ENCODE measurements at regions of chr11 and their contacts with region 1.

Region 1: DNA sequence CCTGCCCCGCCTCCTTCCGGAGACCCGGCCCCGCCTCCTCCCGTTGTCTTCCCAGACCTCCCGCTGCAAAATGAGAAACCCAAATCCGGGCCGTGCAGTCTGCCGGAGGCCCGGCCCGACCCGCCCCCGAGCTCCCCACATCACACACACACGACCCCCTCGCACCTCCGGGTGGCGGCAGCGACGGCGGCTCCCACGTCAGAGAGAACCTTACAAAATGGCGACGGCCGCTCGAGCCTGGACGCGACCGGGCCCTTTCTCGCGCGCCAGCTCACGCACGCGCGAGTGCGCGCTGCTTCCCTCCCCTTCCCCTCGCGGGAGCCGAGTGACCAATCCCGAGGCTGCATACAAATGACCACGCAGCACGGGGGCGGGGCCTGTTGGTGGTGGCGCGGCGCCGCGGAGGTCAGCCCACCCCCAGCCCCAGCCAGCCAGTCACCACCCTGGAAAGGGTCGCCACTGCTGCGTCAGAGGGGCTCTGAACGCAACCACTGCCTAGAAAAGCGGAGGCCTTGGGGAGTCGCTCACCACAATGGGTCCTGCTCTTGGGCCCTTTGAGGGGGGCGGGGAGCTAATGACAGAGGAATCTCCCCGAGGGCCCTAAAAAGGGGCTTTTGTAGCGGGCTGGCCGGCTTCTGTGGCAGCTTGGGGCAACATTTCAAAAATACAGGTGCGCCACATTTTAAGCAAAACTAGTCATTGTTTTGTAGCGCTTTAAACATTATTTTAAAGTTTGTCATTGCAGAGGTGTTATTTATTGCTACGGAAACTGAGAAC is at the start of gene RBM4B:
- DNase-seq: peak; percentile 97
- ATAC-seq: peak; percentile 90
- H3K4me3 Mint-ChIP-seq: peak within 1 kb of the TSS; percentile 85
- H3K27ac Mint-ChIP-seq: peak within 1 kb of the TSS; percentile 94
- H3K4me1 Mint-ChIP-seq: peaks cover 27% of the 10 kb centered on the region
- H3K27me3 Mint-ChIP-seq: no peaks in the 10 kb centered on the region
- total RNA-seq, gene RBM4B: 14.7 to 14.8 TPM

Region 2: DNA sequence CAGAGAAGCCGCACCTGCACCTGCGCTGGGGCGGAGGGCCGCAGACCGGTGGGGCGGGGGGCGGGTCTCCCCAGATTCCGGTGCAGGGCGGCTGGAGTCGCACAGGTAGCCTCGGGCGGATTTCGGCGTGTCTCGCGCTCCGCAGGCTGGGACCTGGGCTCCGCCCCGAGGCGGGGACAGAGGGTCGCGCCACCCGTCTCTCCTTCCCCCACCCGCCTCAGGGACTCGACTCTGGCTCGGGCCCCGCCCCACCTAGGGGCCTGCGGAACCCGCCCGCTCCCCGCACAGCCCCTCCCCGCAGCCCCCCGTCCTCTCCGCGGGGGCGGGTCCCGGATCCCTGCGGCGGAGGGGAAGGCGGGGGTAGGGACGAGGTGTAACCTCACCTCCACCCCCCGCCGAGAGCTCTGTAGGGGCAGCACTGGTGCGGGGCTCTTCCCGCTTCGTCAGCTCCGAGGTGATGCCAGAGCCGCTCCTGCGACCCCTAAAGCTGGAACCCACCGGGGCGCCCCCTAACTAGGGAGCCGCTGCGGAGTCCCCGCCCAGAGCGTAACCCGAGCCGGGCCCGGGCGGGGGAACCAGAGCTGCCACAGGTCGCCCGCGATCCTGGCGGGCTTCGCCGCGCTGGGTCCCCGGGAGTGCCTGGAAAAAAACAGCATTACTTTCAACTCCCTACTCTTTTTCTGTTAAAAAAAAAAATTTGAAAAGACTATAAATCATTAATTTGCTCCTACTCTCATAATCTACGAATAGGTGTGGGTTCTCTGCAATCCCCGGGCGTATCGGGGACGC is 306.0 kb before region 1 on chr11 and contains the start of gene SLC29A2:
- CTCF ChIA-PET with region 1: no interaction called
- POLR2A ChIA-PET with region 1: no interaction called
- intact Hi-C with region 1: loop called in 1 of 2 experiments (anchors 1 kb)
- DNase-seq: peak; percentile 92
- ATAC-seq: peak; percentile 87
- H3K4me3 Mint-ChIP-seq: peak within 1 kb of the TSS; percentile 91
- H3K27ac Mint-ChIP-seq: peak within 1 kb of the TSS; percentile 91
- H3K4me1 Mint-ChIP-seq: peaks cover 19% of the 10 kb centered on the region
- H3K27me3 Mint-ChIP-seq: no peaks in the 10 kb centered on the region
- total RNA-seq, gene SLC29A2: 13.6 to 14.4 TPM

Region 3: DNA sequence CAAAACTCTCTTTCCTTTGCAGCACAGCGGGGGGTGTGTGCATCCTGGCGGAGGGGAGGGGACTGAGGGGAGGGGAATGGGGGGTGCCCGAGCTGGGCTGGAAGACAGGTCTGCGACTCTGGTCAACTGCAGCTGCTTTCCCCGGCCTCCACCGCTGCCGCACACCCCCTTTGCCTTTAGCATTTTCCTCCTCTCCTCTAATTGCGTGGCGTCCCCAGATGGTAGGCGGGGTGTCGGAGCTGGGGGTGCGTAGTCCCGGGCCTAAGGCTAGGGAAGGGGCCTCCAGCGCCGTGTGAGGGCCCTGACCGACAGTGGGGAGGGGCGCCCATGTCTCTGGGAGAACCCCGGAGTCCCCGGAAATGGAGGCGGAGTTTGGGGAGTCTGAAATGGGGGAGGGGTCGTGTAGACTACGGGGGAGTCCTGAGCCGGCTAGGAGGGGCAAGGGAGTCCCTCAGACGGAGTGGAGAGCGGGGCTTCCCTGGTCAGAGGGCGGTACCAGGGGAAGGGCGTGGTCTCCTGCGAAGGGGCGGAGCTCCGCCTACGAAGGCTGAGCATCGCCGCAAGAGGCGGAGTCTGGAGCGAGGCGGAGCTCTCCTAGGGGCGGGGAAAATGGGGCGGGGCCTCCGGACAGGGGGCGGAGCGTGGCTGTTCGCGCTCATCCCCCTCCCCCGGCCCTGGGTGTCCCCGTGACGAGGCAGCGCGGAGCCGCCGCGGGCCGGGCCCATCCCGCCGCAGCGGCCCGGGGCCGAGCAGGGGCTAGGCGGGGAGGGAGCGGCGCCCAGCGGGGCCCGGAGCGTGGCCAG is 211.4 kb before region 1 on chr11 and contains the start of gene PELI3:
- CTCF ChIA-PET with region 1: interaction called, 3 read pairs
- POLR2A ChIA-PET with region 1: interaction called, 3 read pairs
- intact Hi-C with region 1: loop called in 1 of 2 experiments (anchors 1 kb)
- DNase-seq: peak; percentile 98
- ATAC-seq: peak; percentile 88
- H3K4me3 Mint-ChIP-seq: peak within 1 kb of the TSS; percentile 85
- H3K27ac Mint-ChIP-seq: peak within 1 kb of the TSS; percentile 79
- H3K4me1 Mint-ChIP-seq: peaks cover 38% of the 10 kb centered on the region
- H3K27me3 Mint-ChIP-seq: no peaks in the 10 kb centered on the region
- total RNA-seq, gene PELI3: 5.7 to 7.0 TPM

Region 4: DNA sequence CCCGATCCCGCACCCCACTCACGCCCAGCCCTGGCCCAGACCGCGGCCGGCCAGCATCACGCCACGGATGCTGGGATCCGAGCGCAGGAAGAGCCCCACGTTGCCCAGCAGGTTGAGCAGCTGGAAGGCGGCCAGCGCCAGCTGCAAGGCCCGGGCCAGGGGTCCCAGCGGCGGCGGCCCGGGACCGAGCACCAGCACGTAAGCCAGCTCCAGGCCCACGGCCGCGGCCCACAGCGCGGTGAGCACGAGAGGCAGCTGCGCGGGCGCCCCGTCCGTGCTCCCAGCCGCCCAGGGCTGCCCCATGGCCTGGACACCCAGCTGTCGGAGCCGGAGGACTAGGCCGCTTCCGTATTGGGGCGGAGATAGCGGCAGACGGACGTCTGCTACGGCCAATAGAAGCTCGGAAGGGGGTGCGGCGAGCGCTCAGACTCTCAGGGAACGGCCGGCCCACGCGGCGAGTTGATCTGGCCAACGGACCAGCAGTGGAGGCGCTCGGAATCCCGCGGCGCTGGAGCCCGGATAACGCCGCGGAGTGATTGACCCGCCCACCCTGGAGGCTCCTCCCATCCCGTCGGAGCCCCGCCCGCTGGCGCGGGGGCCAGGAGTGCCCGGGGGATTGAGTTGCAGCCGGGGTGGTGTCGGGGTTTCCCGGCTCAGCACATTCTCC is 132.0 kb before region 1 on chr11 and contains the start of gene ZDHHC24:
- CTCF ChIA-PET with region 1: interaction called, 3 read pairs
- POLR2A ChIA-PET with region 1: interaction called, 7 read pairs
- intact Hi-C with region 1: loop called in 1 of 2 experiments (anchors 1 kb)
- DNase-seq: peak; percentile 95
- ATAC-seq: peak; percentile 94
- H3K4me3 Mint-ChIP-seq: peak within 1 kb of the TSS; percentile 76
- H3K27ac Mint-ChIP-seq: peak within 1 kb of the TSS; percentile 67
- H3K4me1 Mint-ChIP-seq: peaks cover 20% of the 10 kb centered on the region
- H3K27me3 Mint-ChIP-seq: peaks cover 5% of the 10 kb centered on the region
- total RNA-seq, gene ZDHHC24: 9.7 to 11.3 TPM

Region 5: GRCh38 chr11:66592457-66593302 is 85.1 kb before region 1 on chr11 and contains the starts of genes CCDC87 and CCS:
- CTCF ChIA-PET with region 1: interaction called, 24 read pairs
- POLR2A ChIA-PET with region 1: interaction called, 3 read pairs
- intact Hi-C with region 1: loop called (anchors 1 kb)
- DNase-seq: peak; percentile 99
- ATAC-seq: peak; percentile 100
- H3K4me3 Mint-ChIP-seq: peak within 1 kb of the TSS; percentile 93
- H3K27ac Mint-ChIP-seq: peak within 1 kb of the TSS; percentile 98
- H3K4me1 Mint-ChIP-seq: peaks cover 19% of the 10 kb centered on the region
- H3K27me3 Mint-ChIP-seq: no peaks in the 10 kb centered on the region
- total RNA-seq, gene CCDC87: 0.09 to 0.14 TPM
- total RNA-seq, gene CCS: 16.3 to 24.0 TPM

Region 6: GRCh38 chr11:66663741-66664296 is 14.0 kb before region 1 on chr11:
- CTCF ChIA-PET with region 1: interaction called, 11 read pairs
- POLR2A ChIA-PET with region 1: interaction called, 4 read pairs
- intact Hi-C with region 1: no loop called
- DNase-seq: no peak
- ATAC-seq: no peak
- H3K4me3 Mint-ChIP-seq: no peak overlapping the region
- H3K27ac Mint-ChIP-seq: no peak overlapping the region
- H3K4me1 Mint-ChIP-seq: peaks cover 7% of the 10 kb centered on the region
- H3K27me3 Mint-ChIP-seq: no peaks in the 10 kb centered on the region

Region 7: GRCh38 chr11:67118801-67119584 is 441.2 kb after region 1 on chr11 and contains the start of gene KDM2A:
- CTCF ChIA-PET with region 1: no interaction called
- POLR2A ChIA-PET with region 1: no interaction called
- intact Hi-C with region 1: loop called in 1 of 2 experiments (anchors 2 kb)
- DNase-seq: peak; percentile 100
- ATAC-seq: peak; percentile 85
- H3K4me3 Mint-ChIP-seq: peak within 1 kb of the TSS; percentile 98
- H3K27ac Mint-ChIP-seq: peak within 1 kb of the TSS; percentile 83
- H3K4me1 Mint-ChIP-seq: peaks cover 28% of the 10 kb centered on the region
- H3K27me3 Mint-ChIP-seq: no peaks in the 10 kb centered on the region
- total RNA-seq, gene KDM2A: 74.8 to 89.7 TPM